WTC11 (cell line): ENCODE measurements at regions of chr14 and their contacts with region 1.

Region 1: GRCh38 chr14:68862954-68863594 is 70.2 kb upstream of the ZFP36L1 start:
- DNase-seq: peak; percentile 85
- ATAC-seq: peak; percentile 90
- H3K4me3 Mint-ChIP-seq: no peak overlapping the region
- H3K27ac Mint-ChIP-seq: no peak overlapping the region
- H3K4me1 Mint-ChIP-seq: peaks cover 3% of the 10 kb centered on the region; the same call in 1 of the 2 replicates
- H3K27me3 Mint-ChIP-seq: no peaks in the 10 kb centered on the region; the same call in 1 of the 2 replicates
- CTCF ChIP-seq: peak; percentile 64

Region 2: DNA sequence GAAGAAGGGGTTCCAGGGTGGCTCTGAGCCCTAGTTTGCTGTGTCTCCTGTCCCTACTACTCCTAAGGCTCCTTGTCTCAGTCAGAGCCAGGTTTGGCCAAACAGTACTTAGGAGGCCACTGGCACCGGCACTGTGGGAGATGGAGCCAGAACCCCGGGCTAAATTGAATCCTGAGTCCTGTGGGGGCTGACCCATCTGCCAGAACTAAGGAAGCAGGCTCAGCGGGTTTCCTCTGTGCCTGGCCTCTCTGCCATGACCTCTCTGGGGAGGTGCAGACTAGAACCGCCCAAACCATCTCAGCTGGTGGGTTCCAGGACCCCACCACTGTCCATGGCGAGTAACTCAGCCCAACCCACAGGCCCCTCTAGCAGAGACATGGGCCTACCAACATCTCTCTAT is 110.6 kb after region 1 on chr14:
- CTCF ChIA-PET with region 1: no interaction called
- POLR2A ChIA-PET with region 1: no interaction called
- DNase-seq: no peak
- ATAC-seq: no peak
- H3K4me3 Mint-ChIP-seq: no peak overlapping the region
- H3K27ac Mint-ChIP-seq: no peak overlapping the region
- H3K4me1 Mint-ChIP-seq: peaks cover 60% of the 10 kb centered on the region
- H3K27me3 Mint-ChIP-seq: no peaks in the 10 kb centered on the region
- CTCF ChIP-seq: no peak

Region 3: GRCh38 chr14:69101331-69101826 is 238.3 kb after region 1 on chr14:
- CTCF ChIA-PET with region 1: interaction called, 11 read pairs
- POLR2A ChIA-PET with region 1: no interaction called
- DNase-seq: no peak
- ATAC-seq: peak; percentile 79
- H3K4me3 Mint-ChIP-seq: no peak overlapping the region
- H3K27ac Mint-ChIP-seq: no peak overlapping the region
- H3K4me1 Mint-ChIP-seq: peaks cover 17% of the 10 kb centered on the region
- H3K27me3 Mint-ChIP-seq: no peaks in the 10 kb centered on the region
- CTCF ChIP-seq: no peak